CD8-positive, alpha-beta T cell (primary cell): ENCODE measurements at regions of chr3 and their contacts with region 1.

Region 1: DNA sequence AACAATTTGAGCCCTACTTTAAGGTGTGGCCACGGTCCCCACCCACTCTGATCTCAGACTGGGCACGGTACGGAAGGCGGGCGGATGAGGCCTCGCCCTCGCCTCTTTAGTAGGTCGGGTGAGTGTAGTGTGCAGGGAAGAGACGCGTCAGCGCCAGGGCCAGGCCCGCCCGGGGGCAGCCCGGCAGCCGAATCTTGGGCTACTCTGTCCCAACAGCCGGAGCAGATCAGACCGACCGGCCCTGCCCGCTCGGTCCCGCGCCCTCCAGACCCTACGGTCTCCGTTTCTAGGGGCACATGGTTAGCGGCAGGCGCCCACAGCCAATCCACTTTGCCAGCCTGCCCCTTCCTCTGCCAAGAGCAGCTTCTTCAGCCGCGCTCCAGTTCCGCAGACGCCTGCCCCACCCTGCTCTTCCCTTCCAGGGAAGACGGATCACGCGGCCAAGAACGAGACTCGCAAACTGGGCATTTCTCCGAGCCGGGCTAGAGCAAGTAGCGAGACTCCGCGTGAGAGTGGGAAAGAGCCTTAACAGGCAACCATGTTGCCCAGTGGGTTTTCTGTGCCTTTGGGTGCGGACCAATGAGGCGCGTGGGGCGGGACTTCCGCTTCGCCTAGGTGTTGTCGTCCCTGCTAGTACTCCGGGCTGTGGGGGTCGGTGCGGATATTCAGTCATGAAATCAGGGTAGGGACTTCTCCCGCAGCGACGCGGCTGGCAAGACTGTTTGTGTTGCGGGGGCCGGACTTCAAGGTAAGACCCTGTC is at the start of gene RNF13:
- DNase-seq: peak; percentile 83 to 96 (median 93)
- ATAC-seq: peak; percentile 95
- H3K4me3 ChIP-seq: peak within 1 kb of the TSS; percentile 91 to 94
- H3K4me3 Mint-ChIP-seq: peak within 1 kb of the TSS; percentile 99
- H3K27ac ChIP-seq: peak within 1 kb of the TSS; percentile 94 to 95
- H3K27ac Mint-ChIP-seq: peak within 1 kb of the TSS; percentile 100
- H3K4me1 ChIP-seq: peaks cover 29% of the 10 kb centered on the region
- H3K4me1 Mint-ChIP-seq: peaks cover 49% of the 10 kb centered on the region
- H3K27me3 ChIP-seq: no peaks in the 10 kb centered on the region
- H3K27me3 Mint-ChIP-seq: peaks cover 4% of the 10 kb centered on the region
- CTCF ChIP-seq: no peak
- total RNA-seq, gene RNF13: 33.9 to 36.5 TPM

Region 2: DNA sequence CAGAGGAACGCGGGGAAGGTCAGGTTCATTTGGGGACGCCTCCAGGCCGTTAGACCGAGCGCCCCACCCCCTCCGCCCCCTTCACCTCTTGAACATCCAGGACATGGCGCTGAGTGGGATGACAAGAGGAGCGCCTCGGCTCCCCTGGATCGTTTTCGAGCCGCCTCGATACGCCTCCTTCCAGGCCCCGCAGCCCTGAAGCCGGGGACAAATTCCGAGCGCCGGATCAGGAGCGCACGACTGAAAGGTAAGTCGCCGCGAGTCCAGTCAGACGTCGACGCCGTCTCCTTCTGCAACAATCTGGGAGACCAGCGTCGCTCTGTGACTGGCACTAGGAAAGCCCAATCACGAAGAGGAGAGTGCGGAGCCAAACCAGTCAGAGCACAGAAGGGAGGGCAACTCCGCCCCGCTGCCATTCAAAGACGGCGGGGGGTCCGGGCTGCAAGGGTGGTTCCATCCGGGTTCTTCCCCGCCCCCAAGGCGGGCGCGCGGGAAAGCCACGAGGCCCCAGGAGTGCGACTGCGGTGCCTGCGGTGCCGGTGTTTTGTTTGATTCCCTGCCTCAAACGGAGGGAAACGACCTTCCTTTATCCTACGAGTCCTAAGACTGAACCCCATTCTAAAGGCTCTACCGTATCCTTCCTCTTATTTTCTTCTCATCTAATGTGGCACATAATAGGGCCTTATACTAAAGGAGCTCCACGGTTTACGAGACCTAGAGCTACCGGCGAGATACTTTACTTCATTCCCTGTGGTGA is 726.4 kb before region 1 on chr3 and contains the start of gene HLTF:
- CTCF ChIA-PET with region 1: no interaction called
- POLR2A ChIA-PET with region 1: no interaction called
- intact Hi-C with region 1: loop called in 1 of 2 experiments (anchors 1 kb)
- DNase-seq: peak; percentile 82 to 97 (median 92)
- ATAC-seq: peak; percentile 98
- H3K4me3 ChIP-seq: peak within 1 kb of the TSS; percentile 87 to 94
- H3K4me3 Mint-ChIP-seq: peak within 1 kb of the TSS; percentile 99
- H3K27ac ChIP-seq: peak within 1 kb of the TSS; percentile 57 to 63
- H3K27ac Mint-ChIP-seq: peak within 1 kb of the TSS; percentile 92
- H3K4me1 ChIP-seq: peaks cover 13% of the 10 kb centered on the region
- H3K4me1 Mint-ChIP-seq: peaks cover 21% of the 10 kb centered on the region
- H3K27me3 ChIP-seq: no peaks in the 10 kb centered on the region
- H3K27me3 Mint-ChIP-seq: no peaks in the 10 kb centered on the region
- CTCF ChIP-seq: no peak
- total RNA-seq, gene HLTF: 4.6 to 6.3 TPM

Region 3: GRCh38 chr3:149129326-149130205 is 683.2 kb before region 1 on chr3 and contains the start of gene HPS3:
- CTCF ChIA-PET with region 1: no interaction called
- POLR2A ChIA-PET with region 1: no interaction called
- intact Hi-C with region 1: loop called (anchors 1 to 5 kb)
- DNase-seq: peak; percentile 52 to 91 (median 79)
- ATAC-seq: peak; percentile 80
- H3K4me3 ChIP-seq: peak within 1 kb of the TSS; percentile 96 to 97
- H3K4me3 Mint-ChIP-seq: peak within 1 kb of the TSS; percentile 96
- H3K27ac ChIP-seq: peak within 1 kb of the TSS; percentile 72 to 80
- H3K27ac Mint-ChIP-seq: peak within 1 kb of the TSS; percentile 89
- H3K4me1 ChIP-seq: peaks cover 28% of the 10 kb centered on the region
- H3K4me1 Mint-ChIP-seq: peaks cover 53% of the 10 kb centered on the region
- H3K27me3 ChIP-seq: peaks cover 0 to 3% of the 10 kb centered on the region in 2 experiments
- H3K27me3 Mint-ChIP-seq: peaks cover 2% of the 10 kb centered on the region
- CTCF ChIP-seq: no peak
- total RNA-seq, gene HPS3: 5.8 to 6.4 TPM

Region 4: GRCh38 chr3:149752051-149752787 is 60.6 kb before region 1 on chr3 and contains the start of gene COMMD2:
- CTCF ChIA-PET with region 1: interaction called, 14 read pairs
- POLR2A ChIA-PET with region 1: interaction called, 10 read pairs
- intact Hi-C with region 1: loop called (anchors 1 to 2 kb)
- DNase-seq: peak; percentile 49 to 88 (median 68)
- ATAC-seq: peak; percentile 89
- H3K4me3 ChIP-seq: peak within 1 kb of the TSS; percentile 80 to 82
- H3K4me3 Mint-ChIP-seq: peak within 1 kb of the TSS; percentile 97
- H3K27ac ChIP-seq: peak within 1 kb of the TSS; percentile 74 to 79
- H3K27ac Mint-ChIP-seq: peak within 1 kb of the TSS; percentile 97
- H3K4me1 ChIP-seq: peaks cover 20% of the 10 kb centered on the region
- H3K4me1 Mint-ChIP-seq: peaks cover 45% of the 10 kb centered on the region
- H3K27me3 ChIP-seq: no peaks in the 10 kb centered on the region
- H3K27me3 Mint-ChIP-seq: peaks cover 2% of the 10 kb centered on the region
- CTCF ChIP-seq: peak; percentile 55
- total RNA-seq, gene COMMD2: 59.1 to 59.6 TPM

Region 5: DNA sequence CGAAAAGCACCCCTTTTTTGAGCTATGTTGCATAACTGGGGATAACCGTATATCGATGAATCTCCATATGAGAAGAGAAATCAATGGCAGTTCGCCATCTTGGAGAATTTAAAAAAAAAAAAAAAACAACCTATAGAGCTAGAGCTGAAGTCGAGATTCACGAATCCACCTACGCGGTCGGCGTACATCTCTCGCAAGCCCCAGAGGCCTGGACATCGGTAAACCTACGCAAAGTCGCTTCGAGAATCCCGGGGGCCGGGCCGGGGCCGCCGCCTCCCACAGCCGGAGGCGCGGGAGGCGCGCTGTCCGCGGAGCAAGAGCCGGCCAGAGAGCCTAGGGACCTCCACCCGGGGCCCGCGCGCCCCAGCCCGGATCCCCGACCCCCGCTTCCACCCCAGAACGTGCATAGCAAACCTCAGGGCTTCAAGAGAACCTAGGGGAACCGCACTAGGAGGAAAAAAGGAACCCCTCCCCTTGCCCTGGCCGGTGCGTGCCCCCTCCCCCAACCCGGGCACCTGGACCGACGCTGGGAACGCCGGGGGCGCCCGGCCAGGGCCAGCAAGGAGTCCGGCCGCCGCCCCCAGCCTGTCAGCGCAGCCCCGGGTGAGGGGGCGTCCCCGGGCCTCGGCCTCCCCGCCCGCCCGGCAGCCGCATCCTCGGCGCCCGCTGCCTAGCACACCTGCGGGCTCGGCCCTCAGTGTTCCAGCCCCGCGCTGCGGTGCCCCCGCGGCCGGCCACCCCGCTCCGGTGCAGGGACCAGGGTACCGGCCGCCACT is 157.3 kb after region 1 on chr3:
- CTCF ChIA-PET with region 1: no interaction called
- POLR2A ChIA-PET with region 1: interaction called, 3 read pairs
- intact Hi-C with region 1: loop called (anchors 2 to 5 kb)
- DNase-seq: peak; percentile 59 to 90 (median 82)
- ATAC-seq: peak; percentile 56
- H3K4me3 ChIP-seq: peak overlapping the region; percentile 63 to 68
- H3K4me3 Mint-ChIP-seq: peak overlapping the region; percentile 95
- H3K27ac ChIP-seq: peak overlapping the region in 1 of 2 experiments; percentile 16
- H3K27ac Mint-ChIP-seq: peak overlapping the region; percentile 88
- H3K4me1 ChIP-seq: peaks cover 10% of the 10 kb centered on the region
- H3K4me1 Mint-ChIP-seq: peaks cover 23% of the 10 kb centered on the region
- H3K27me3 ChIP-seq: peaks cover 0 to 3% of the 10 kb centered on the region in 2 experiments
- H3K27me3 Mint-ChIP-seq: peaks cover 3% of the 10 kb centered on the region
- CTCF ChIP-seq: no peak

Region 6: DNA sequence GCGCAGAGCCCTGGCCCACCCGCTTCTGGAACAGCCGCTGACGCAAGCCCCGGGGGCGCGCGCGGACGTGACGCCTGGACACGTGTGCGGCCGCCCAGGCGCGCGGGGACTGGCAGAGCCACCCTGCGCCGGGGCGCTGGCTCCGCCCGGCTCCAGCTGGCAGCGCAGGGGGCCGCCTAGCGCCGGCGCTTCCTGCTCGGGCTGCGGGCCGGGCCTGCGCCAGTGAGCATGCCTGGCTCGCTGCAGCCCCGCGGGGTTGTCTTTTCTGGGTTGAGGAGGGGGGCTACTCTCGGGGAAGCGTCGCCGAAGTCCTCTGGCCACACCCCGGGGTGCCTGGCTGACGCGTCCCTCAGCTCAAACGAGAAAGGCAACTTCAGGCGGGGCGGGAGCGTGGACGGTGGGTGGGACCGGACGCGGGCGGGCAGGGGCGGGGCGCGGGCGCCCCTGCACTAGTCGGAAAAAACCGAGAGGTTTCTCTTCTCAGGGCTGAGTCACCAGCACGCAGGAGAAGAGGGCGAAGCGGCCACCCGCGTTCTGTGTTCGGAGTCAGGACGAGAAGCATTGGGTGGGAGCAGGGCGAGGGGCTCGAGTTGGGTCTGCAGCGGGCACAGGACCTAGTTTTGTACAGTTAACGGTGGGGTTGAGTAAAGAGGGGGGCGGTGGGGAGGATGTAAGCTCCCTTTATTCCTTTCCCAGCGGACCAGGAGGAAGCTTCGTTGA is 950.5 kb after region 1 on chr3 and contains the start of gene SIAH2:
- CTCF ChIA-PET with region 1: no interaction called
- POLR2A ChIA-PET with region 1: interaction called, 5 read pairs
- intact Hi-C with region 1: loop called (anchors 1 to 10 kb)
- DNase-seq: peak; percentile 85 to 98 (median 92)
- ATAC-seq: peak; percentile 81
- H3K4me3 ChIP-seq: peak within 1 kb of the TSS; percentile 81 to 87
- H3K4me3 Mint-ChIP-seq: peak within 1 kb of the TSS; percentile 94
- H3K27ac ChIP-seq: peak within 1 kb of the TSS; percentile 97 to 98
- H3K27ac Mint-ChIP-seq: peak within 1 kb of the TSS; percentile 99
- H3K4me1 ChIP-seq: peaks cover 39% of the 10 kb centered on the region
- H3K4me1 Mint-ChIP-seq: peaks cover 43% of the 10 kb centered on the region
- H3K27me3 ChIP-seq: no peaks in the 10 kb centered on the region
- H3K27me3 Mint-ChIP-seq: no peaks in the 10 kb centered on the region
- CTCF ChIP-seq: no peak
- total RNA-seq, gene SIAH2: 57.0 to 65.4 TPM